CD8-positive, alpha-beta T cell (primary cell): ENCODE measurements at regions of chr13 and their contacts with region 1.

Region 1: GRCh38 chr13:32310134-32310706 is 4.9 kb downstream of the ZAR1L start:
- DNase-seq: peak in 4 of 9 experiments; percentile 16 to 67 (median 36)
- ATAC-seq: peak; percentile 43
- H3K4me3 ChIP-seq: no peak overlapping the region
- H3K4me3 Mint-ChIP-seq: peak overlapping the region; percentile 33
- H3K27ac ChIP-seq: no peak overlapping the region
- H3K27ac Mint-ChIP-seq: no peak overlapping the region
- H3K4me1 ChIP-seq: peaks cover 8% of the 10 kb centered on the region
- H3K4me1 Mint-ChIP-seq: peaks cover 17% of the 10 kb centered on the region
- H3K27me3 ChIP-seq: no peaks in the 10 kb centered on the region
- H3K27me3 Mint-ChIP-seq: no peaks in the 10 kb centered on the region
- CTCF ChIP-seq: peak; percentile 65

Region 2: DNA sequence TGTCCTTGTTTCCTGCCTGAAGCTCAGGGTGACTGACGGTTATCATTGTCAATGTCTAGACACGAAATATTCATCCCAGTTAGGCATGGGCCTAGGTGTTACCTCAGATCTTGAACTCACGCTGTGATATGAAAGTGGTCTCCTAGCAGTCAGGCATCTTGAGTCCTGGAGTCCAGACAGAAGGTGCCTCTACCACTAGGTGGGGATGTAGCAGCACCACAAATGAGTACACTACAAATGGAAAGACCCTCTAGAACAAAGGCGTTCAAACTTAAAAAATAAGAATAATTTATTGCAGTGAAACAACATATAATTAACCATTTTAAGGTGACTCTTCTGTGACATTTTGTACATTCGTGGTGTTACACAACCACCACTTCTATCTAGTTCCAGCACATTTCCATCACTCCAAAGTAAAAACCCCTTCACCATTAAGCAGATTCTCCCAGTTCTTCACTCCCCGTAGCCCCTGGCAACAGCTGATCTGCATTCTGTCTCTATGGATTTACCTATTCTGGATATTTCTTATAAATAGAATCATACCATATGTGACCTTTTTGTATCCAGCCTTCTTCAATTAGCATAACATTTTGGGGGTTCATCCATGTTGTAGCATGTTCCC is 290.5 kb before region 1 on chr13:
- CTCF ChIA-PET with region 1: no interaction called
- POLR2A ChIA-PET with region 1: no interaction called
- intact Hi-C with region 1: loop called (anchors 1 to 5 kb)
- DNase-seq: peak in 6 of 9 experiments; percentile 8 to 62 (median 20)
- ATAC-seq: peak; percentile 42
- H3K4me3 ChIP-seq: no peak overlapping the region
- H3K4me3 Mint-ChIP-seq: no peak overlapping the region
- H3K27ac ChIP-seq: no peak overlapping the region
- H3K27ac Mint-ChIP-seq: no peak overlapping the region
- H3K4me1 ChIP-seq: no peaks in the 10 kb centered on the region
- H3K4me1 Mint-ChIP-seq: no peaks in the 10 kb centered on the region
- H3K27me3 ChIP-seq: no peaks in the 10 kb centered on the region
- H3K27me3 Mint-ChIP-seq: no peaks in the 10 kb centered on the region
- CTCF ChIP-seq: peak; percentile 45

Region 3: GRCh38 chr13:32267836-32268439 is 42.3 kb before region 1 on chr13:
- CTCF ChIA-PET with region 1: interaction called, 3 read pairs
- POLR2A ChIA-PET with region 1: no interaction called
- intact Hi-C with region 1: loop called (anchors 1 to 2 kb)
- DNase-seq: peak; percentile 21 to 66 (median 52)
- ATAC-seq: peak; percentile 97
- H3K4me3 ChIP-seq: no peak overlapping the region
- H3K4me3 Mint-ChIP-seq: no peak overlapping the region
- H3K27ac ChIP-seq: no peak overlapping the region
- H3K27ac Mint-ChIP-seq: no peak overlapping the region
- H3K4me1 ChIP-seq: no peaks in the 10 kb centered on the region
- H3K4me1 Mint-ChIP-seq: no peaks in the 10 kb centered on the region
- H3K27me3 ChIP-seq: no peaks in the 10 kb centered on the region
- H3K27me3 Mint-ChIP-seq: no peaks in the 10 kb centered on the region
- CTCF ChIP-seq: peak; percentile 82

Region 4: GRCh38 chr13:32297206-32297605 is 13.0 kb before region 1 on chr13:
- CTCF ChIA-PET with region 1: no interaction called
- POLR2A ChIA-PET with region 1: no interaction called
- intact Hi-C with region 1: no loop called
- DNase-seq: no peak
- ATAC-seq: no peak
- H3K4me3 ChIP-seq: no peak overlapping the region
- H3K4me3 Mint-ChIP-seq: no peak overlapping the region
- H3K27ac ChIP-seq: no peak overlapping the region
- H3K27ac Mint-ChIP-seq: no peak overlapping the region
- H3K4me1 ChIP-seq: no peaks in the 10 kb centered on the region
- H3K4me1 Mint-ChIP-seq: no peaks in the 10 kb centered on the region
- H3K27me3 ChIP-seq: no peaks in the 10 kb centered on the region
- H3K27me3 Mint-ChIP-seq: peaks cover 16% of the 10 kb centered on the region
- CTCF ChIP-seq: no peak

Region 5: DNA sequence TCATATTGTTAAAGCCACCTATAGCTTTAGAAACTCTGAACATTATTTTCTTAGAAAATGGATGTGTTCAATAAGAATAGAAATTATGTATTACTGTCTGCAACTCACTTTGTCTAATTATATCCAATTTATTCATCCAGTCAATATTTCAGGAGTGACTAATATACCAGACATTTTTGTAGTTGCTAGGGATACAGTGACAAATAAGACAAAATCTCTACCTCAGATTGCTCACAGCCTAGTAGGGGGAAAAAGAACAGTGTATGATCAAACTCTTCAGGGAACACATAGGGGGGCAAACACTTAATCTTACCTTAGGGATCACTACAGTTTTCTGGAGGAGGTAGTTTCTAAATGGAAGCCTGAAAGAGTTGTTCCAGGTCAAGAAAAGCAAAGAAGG is 13.7 kb after region 1 on chr13:
- CTCF ChIA-PET with region 1: no interaction called
- POLR2A ChIA-PET with region 1: no interaction called
- intact Hi-C with region 1: no loop called
- DNase-seq: no peak
- ATAC-seq: no peak
- H3K4me3 ChIP-seq: no peak overlapping the region
- H3K4me3 Mint-ChIP-seq: no peak overlapping the region
- H3K27ac ChIP-seq: no peak overlapping the region
- H3K27ac Mint-ChIP-seq: no peak overlapping the region
- H3K4me1 ChIP-seq: no peaks in the 10 kb centered on the region
- H3K4me1 Mint-ChIP-seq: no peaks in the 10 kb centered on the region
- H3K27me3 ChIP-seq: no peaks in the 10 kb centered on the region
- H3K27me3 Mint-ChIP-seq: no peaks in the 10 kb centered on the region
- CTCF ChIP-seq: no peak